ENCODE measurements at regions of chr11 and their contacts with region 1.

Region 1: DNA sequence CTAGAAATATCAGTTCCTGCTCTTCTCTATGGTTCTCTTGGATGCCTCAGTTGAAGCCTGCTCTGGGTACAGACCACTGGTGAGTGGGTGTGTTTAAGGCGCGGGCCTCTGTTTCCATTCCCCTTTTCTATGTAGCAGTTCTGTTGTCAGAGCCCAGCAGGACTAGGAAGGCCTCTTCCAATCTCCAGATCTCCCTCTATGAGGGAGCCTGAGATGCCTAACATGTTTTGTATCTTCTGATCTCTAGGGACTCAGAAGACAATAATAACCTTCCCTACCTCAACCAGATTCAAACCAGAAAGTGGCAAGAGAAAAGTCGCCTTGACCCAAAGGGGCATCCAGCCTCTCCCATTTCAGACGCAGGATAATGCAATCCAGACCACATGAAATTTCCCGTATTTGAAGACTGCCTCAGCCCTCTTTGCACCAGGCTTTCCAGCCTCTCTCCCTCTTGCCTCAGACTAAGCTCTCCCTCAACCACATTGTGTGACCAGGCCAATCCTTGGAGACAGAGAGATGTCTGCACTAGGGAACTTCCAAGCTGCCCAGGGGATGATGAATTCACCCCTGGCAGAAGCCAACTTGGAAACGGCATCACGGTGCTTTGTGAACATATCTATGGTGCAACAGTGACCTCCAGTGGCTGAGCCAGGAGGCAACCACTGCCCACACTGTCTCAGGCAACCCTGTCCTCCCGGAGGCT is 150.1 kb upstream of the UBASH3B start:
- DNase-seq: peak; percentile 79
- ATAC-seq: peak; percentile 99
- H3K4me3 ChIP-seq: no peak overlapping the region
- H3K27ac ChIP-seq: no peak overlapping the region
- H3K4me1 ChIP-seq: no peaks in the 10 kb centered on the region
- H3K27me3 ChIP-seq: peaks cover 10% of the 10 kb centered on the region
- CTCF ChIP-seq: peak; percentile 88

Region 2: DNA sequence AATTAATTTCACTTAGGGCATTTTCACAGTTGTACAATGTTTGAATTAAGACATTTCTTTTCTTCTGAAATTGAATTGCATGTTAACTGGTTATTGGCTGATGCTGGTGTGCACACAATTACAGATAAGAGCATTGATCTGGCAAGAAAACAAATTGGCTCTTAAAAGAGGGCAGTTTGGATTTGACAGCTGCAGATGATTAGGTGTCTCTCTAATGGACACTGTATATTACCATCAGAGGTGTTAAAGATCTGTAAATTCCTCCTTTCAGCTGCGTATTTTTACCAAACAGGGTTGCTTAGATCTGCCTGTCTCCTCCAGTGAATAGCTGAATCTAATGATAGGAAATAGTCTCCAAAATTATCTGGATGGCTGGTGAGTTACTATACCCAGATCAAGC is 588.0 kb before region 1 on chr11:
- CTCF ChIA-PET with region 1: interaction called, 10 read pairs
- POLR2A ChIA-PET with region 1: no interaction called
- in situ Hi-C with region 1: no loop called
- intact Hi-C with region 1: no loop called
- DNase-seq: no peak
- ATAC-seq: no peak
- H3K4me3 ChIP-seq: no peak overlapping the region
- H3K27ac ChIP-seq: no peak overlapping the region
- H3K4me1 ChIP-seq: no peaks in the 10 kb centered on the region
- H3K27me3 ChIP-seq: no peaks in the 10 kb centered on the region
- CTCF ChIP-seq: no peak

Region 3: DNA sequence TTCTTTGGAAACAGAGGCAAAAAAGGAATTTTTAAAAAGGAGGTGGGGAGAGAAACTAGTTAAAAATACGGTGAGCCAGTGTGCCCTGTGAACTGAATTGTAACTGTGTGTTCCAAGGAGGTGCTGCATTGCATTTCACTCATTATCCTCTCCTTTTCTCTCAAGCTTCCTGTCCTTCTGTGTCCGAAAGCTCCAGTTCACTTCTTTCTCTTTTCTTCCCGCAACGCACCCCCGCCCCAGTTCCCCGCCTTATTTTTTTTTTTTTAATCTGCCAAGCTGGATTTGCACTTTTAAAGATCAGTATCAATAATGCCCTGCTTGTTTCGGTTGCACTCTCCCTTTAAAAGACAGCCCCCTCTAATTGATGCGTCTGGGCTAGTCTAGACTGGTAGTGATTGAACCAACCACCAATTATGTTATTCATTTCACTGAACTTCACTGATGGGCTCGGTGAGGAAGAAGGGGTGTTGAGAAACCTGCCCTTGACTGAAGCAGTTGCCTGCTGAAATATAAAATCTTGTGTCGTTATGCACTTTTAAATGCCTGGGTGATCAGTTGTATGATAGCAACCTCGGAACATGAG is 407.9 kb before region 1 on chr11:
- CTCF ChIA-PET with region 1: no interaction called
- POLR2A ChIA-PET with region 1: no interaction called
- in situ Hi-C with region 1: no loop called
- intact Hi-C with region 1: no loop called
- DNase-seq: no peak
- ATAC-seq: no peak
- H3K4me3 ChIP-seq: peak overlapping the region; percentile 42 to 43
- H3K27ac ChIP-seq: peak overlapping the region; percentile 84
- H3K4me1 ChIP-seq: peaks cover 3% of the 10 kb centered on the region; the same call in 1 of the 2 replicates
- H3K27me3 ChIP-seq: no peaks in the 10 kb centered on the region
- CTCF ChIP-seq: no peak

Region 4: DNA sequence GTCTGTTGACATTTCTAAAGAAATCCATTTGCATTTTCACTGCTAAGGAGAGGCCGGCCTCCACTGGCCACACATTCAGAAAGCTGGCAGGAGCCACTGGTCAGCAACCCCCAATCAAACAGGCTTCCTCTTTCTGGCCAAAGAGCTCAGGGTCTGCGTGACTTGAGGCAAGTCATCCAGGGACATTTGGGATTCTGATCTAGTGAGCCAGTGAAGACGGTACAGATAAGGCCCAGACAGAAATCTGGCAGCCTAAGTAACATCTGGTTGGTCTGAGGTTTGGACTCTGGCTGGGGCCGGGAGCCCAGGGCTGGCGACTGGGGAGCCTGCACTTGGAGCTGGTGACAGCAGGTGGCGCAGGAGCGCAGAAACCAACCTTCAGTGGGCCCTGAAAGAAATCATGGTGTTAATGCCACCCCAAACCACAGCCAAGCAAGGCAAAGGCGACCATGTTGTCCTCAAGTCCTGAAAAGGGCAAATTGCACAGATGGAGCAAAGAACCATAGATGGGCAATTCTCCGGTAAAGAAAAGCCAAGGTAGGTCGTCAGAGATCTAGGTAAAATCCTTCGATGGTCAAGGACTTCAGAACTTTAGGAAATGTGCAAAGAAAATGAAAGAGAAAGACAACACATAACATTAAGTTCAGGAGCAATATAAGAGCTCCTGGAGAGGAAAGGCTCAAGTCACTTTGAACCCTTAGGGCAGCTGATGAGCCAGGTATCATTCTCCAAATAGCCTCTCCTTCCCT is 290.0 kb before region 1 on chr11:
- CTCF ChIA-PET with region 1: interaction called, 5 read pairs
- POLR2A ChIA-PET with region 1: no interaction called
- in situ Hi-C with region 1: no loop called
- intact Hi-C with region 1: loop called (anchors 1 kb)
- DNase-seq: no peak
- ATAC-seq: peak; percentile 97
- H3K4me3 ChIP-seq: no peak overlapping the region
- H3K27ac ChIP-seq: no peak overlapping the region
- H3K4me1 ChIP-seq: no peaks in the 10 kb centered on the region
- H3K27me3 ChIP-seq: no peaks in the 10 kb centered on the region
- CTCF ChIP-seq: peak; percentile 98

Region 5: DNA sequence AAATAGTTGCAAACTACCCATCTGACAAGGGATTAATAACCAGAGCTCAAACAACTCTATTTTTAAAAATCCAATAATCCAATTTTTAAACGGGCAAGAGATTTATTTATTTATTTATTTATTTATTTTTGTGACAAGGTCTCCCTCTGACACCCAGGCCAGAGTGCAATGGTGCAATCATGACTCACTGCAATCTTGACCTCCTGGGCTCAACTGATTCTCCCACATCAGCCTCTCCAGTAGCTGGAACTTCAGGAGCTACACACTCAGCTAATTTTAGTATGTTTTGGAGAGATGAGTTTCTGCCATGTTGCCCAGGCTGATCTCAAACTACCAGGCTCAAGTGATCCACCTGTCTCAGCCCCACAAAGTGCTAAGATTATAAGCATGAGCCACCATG is 122.3 kb before region 1 on chr11:
- CTCF ChIA-PET with region 1: no interaction called
- POLR2A ChIA-PET with region 1: no interaction called
- in situ Hi-C with region 1: no loop called
- intact Hi-C with region 1: no loop called
- DNase-seq: no peak
- ATAC-seq: no peak
- H3K4me3 ChIP-seq: no peak overlapping the region
- H3K27ac ChIP-seq: no peak overlapping the region
- H3K4me1 ChIP-seq: no peaks in the 10 kb centered on the region
- H3K27me3 ChIP-seq: no peaks in the 10 kb centered on the region
- CTCF ChIP-seq: no peak

Region 6: GRCh38 chr11:122556605-122557004 is 51.1 kb after region 1 on chr11:
- CTCF ChIA-PET with region 1: no interaction called
- POLR2A ChIA-PET with region 1: no interaction called
- in situ Hi-C with region 1: no loop called
- intact Hi-C with region 1: no loop called
- DNase-seq: no peak
- ATAC-seq: peak; percentile 93
- H3K4me3 ChIP-seq: peak overlapping the region; percentile 38 to 55
- H3K27ac ChIP-seq: peak overlapping the region; percentile 44
- H3K4me1 ChIP-seq: peaks cover 5% of the 10 kb centered on the region; the same call in 1 of the 2 replicates
- H3K27me3 ChIP-seq: no peaks in the 10 kb centered on the region
- CTCF ChIP-seq: peak; percentile 92

Measured in Panc1 (cell line).